ENCODE measurements at regions of chr5 and their contacts with region 1.

Region 1: DNA sequence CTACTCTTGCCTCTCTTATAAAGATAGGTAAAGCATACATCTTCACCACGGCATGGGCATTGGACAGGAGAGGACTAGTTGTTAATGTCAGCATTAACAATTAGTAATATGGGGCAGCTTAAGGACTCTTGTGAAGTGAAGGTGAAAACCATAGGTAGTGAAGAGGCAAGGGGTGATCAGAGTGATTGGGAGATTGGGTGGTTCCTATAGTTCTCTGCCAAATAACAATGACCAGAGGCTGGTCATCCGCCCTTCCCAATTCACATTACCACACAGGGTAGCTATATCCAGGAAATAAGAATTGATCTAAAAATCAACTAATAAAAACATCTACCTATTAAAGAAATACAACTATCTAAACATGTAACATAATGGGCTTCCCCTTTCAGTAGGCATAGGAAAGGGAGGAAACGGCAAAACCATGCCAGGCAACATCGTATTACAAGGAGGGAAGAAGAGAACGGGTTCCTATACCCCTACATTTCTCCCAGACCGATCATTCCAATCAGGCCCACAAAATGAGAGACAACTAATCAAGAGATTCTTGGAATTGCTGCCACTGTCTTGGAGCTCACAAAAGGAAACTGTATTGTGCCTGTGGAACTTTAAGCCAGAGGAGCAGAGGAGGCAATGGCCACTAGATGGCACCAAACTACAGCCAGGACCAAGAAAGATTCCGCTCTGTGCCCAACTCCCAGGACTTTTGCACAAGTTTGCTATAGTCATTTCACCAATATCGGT is 121.6 kb downstream of the FBXL17 start:
- DNase-seq: peak; percentile 7 to 82 (median 48)
- ATAC-seq: peak; percentile 58 to 75 (median 68)
- H3K4me3 ChIP-seq: no peak overlapping the region
- H3K4me3 Mint-ChIP-seq: no peak overlapping the region
- H3K27ac ChIP-seq: no peak overlapping the region
- H3K27ac Mint-ChIP-seq: no peak overlapping the region
- H3K4me1 ChIP-seq: peaks cover 0 to 3% of the 10 kb centered on the region in 2 experiments
- H3K4me1 Mint-ChIP-seq: peaks cover 0 to 8% (median 8%) of the 10 kb centered on the region in 3 donors
- H3K27me3 ChIP-seq: no peaks in the 10 kb centered on the region
- H3K27me3 Mint-ChIP-seq: no peaks in the 10 kb centered on the region

Region 2: DNA sequence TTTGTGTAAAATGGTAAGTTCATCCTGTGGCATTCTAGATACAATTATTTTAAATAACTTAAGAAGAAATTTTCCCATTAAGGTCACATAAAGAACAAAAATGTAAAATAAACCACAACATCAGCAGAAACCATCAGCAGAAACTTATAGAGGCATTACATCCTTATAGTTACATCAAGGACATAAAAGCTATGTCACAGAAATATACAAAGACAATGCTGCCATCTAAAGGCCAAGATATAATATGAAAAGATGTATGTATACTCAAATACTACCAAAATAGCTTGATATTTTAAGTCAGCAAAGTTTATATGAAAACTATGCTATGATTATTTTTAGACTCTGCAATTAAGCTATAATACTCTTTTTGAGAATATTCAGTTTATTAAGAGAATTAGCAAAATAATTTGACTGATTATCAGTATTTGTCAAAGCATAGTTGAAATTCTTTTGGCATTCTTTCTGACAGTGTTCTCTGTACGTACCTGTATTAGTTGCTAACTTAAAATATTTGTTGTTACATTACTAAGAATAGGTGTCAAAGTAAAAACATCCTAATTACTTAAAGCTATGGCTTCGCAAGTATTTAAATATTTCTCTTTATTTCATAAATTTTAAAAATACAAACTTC is 85.4 kb after region 1 on chr5:
- CTCF ChIA-PET with region 1: interaction called, 9 to 66 read pairs
- POLR2A ChIA-PET with region 1: no interaction called
- DNase-seq: peak in 1 of 35 experiments; percentile 63
- ATAC-seq: peak in 2 of 4 experiments; percentile 47 to 54
- H3K4me3 ChIP-seq: no peak overlapping the region
- H3K4me3 Mint-ChIP-seq: no peak overlapping the region
- H3K27ac ChIP-seq: no peak overlapping the region
- H3K27ac Mint-ChIP-seq: no peak overlapping the region
- H3K4me1 ChIP-seq: no peaks in the 10 kb centered on the region
- H3K4me1 Mint-ChIP-seq: peaks cover 0 to 4% (median 2%) of the 10 kb centered on the region in 3 donors
- H3K27me3 ChIP-seq: no peaks in the 10 kb centered on the region
- H3K27me3 Mint-ChIP-seq: no peaks in the 10 kb centered on the region

Region 3: GRCh38 chr5:108521841-108522506 is 261.7 kb after region 1 on chr5:
- CTCF ChIA-PET with region 1: interaction called in 1 of 2 experiments, 11 read pairs
- POLR2A ChIA-PET with region 1: no interaction called
- DNase-seq: peak in 4 of 35 experiments; percentile 1 to 50 (median 8)
- ATAC-seq: peak; percentile 46 to 70 (median 58)
- H3K4me3 ChIP-seq: no peak overlapping the region
- H3K4me3 Mint-ChIP-seq: no peak overlapping the region
- H3K27ac ChIP-seq: no peak overlapping the region
- H3K27ac Mint-ChIP-seq: no peak overlapping the region
- H3K4me1 ChIP-seq: no peaks in the 10 kb centered on the region
- H3K4me1 Mint-ChIP-seq: peaks cover 0 to 2% (median 0%) of the 10 kb centered on the region in 3 donors
- H3K27me3 ChIP-seq: peaks cover 0 to 2% of the 10 kb centered on the region in 2 experiments
- H3K27me3 Mint-ChIP-seq: peaks cover 9 to 22% of the 10 kb centered on the region in 2 donors